ENCODE measurements at regions of chr3 and their contacts with region 1.

Region 1: DNA sequence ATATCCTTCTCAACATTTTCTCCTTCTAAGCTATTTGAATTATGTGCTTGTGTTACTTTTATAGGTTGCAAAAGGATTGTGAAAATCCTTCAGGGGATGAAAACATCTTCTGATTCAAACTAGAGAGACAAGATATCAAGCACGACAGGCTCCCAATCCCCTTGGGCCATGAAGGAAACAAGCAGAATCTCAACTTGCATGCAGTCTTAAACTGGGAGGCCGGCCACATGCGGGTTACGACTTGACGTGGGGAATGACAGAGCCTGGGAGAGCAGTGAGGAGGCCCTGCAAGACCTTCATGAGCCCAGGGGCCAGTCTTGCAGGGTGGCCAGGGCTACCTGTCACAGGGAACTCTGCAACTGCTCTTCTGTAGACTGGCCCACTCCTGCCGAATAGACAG is 94.4 kb downstream of the SCN11A start:
- DNase-seq: no peak
- H3K4me3 ChIP-seq: no peak overlapping the region
- H3K27ac ChIP-seq: no peak overlapping the region
- H3K4me1 ChIP-seq: peaks cover 2 to 27% (median 5%) of the 10 kb centered on the region in 4 experiments
- H3K27me3 ChIP-seq: no peaks in the 10 kb centered on the region

Region 2: DNA sequence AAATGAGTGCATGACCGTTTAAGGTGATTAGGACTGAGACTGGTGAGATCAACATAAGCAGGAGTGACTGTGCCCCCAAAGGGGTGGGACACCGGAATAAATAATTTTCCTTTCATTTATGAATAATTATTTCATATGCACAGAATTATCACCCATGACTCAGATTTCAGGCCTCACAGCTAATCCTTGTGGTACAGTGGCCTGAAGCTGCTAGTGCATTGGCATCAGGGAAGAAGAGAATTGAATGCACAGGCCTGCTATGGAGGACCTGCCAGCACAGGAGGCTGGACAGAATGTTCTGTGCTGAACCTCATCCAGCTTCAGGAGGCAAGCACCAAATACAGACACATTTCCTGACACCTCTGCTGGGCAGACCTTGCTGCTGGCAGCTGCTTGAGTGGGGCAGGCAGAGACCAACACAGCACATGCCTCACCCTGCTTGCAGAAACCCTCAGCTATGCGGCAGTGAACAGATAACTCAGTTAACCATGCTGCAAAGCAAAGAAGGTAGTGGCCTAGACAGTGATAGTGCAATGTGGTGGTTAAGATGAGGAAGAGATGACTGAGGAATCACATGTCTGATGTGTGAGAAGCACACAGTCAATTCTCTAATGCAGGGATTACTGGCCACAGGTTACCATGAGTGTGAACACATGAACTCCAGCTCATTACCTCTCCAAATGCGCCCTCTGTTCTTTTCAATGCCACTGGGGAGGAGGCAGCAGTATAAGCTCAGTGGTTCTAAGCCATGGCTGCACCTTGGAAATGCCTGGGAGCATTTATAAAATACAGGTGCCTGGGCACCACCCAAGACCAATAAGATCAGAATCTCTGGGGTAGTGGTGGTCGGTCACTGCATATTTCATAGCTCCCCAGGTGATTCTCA is 239.7 kb before region 1 on chr3:
- CTCF ChIA-PET with region 1: no interaction called
- POLR2A ChIA-PET with region 1: no interaction called
- DNase-seq: peak in 2 of 3 donors; percentile 30 to 50
- H3K4me3 ChIP-seq: no peak overlapping the region
- H3K27ac ChIP-seq: no peak overlapping the region
- H3K4me1 ChIP-seq: peaks cover 0 to 5% (median 2%) of the 10 kb centered on the region in 4 experiments
- H3K27me3 ChIP-seq: peaks cover 0 to 5% (median 0%) of the 10 kb centered on the region in 5 experiments

Region 3: DNA sequence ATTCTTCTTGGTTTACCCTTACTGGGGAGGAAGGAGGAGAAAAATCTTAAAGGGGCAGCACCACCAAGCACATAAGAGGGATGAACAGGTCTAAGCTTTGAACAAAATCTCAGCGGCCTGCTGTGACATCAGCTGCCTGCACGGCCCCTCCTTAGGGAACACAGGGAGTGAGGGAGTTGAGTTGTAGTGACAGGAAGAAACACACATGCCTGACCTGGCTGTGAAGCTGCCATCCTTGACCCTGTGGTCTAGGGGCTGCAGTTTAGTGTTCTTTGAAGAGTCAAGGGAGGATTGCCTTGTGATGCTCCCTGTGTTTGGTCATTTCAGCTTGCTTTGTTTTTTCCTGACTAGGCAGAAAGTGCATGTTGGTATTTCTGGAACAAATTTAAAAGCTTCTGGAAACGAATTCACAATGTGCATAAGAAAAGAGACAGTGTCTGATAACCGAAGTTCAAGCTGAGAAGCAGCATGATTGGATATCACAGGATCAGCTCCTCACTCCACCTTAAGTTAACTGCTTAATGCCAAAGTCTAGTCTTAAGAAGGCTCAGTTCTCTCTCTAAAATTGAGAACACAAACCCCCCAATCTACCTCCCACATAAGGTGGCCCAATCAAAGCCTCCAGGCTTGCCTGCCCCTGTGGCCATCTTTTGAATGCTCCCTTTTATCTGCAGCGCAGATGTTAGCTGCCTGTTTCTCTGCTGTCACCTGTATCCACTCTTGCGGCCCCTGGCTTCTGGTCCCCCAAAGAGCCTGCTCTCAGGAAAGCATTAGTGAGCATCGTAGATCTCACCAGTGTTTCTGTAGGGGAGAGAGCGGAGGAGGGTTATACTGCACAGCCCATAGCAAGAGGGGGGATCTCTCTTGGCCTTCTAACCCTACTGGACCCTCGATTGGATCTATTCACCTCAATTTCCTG is 12.3 kb after region 1 on chr3:
- CTCF ChIA-PET with region 1: interaction called, 10 read pairs
- POLR2A ChIA-PET with region 1: no interaction called
- DNase-seq: no peak
- H3K4me3 ChIP-seq: no peak overlapping the region
- H3K27ac ChIP-seq: no peak overlapping the region
- H3K4me1 ChIP-seq: no peaks in the 10 kb centered on the region
- H3K27me3 ChIP-seq: no peaks in the 10 kb centered on the region